GM23248 (cell line): ENCODE measurements at regions of chr10 and their contacts with region 1.

Region 1: DNA sequence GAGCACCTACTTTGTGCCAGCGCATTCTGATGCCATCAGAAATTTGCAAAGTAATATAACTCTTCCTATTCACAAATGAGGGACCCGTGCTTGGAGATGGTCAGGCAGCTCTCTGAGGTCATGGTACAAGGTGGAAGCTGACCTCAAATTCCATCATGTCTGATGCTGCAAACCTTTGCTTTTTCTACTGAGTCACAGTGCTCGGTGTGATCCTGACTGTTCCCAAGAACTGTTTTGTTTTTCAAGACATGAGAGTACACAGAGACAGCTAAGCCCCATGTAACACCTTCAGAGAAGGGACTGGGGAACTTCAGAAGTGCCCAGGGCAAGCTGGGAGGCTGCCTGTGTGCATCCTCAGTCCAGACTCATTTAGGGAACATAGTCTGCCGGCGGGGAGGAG is 111.3 kb downstream of the FRMD4A start:
- DNase-seq: no peak
- H3K4me3 ChIP-seq: no peak overlapping the region
- H3K27ac ChIP-seq: no peak overlapping the region
- H3K4me1 ChIP-seq: no peaks in the 10 kb centered on the region
- H3K27me3 ChIP-seq: peaks cover 27% of the 10 kb centered on the region; the same call in 1 of the 2 replicates

Region 2: GRCh38 chr10:14466257-14466656 is 246.8 kb after region 1 on chr10:
- in situ Hi-C with region 1: loop called (anchors 10 kb)
- DNase-seq: peak; percentile 19
- H3K4me3 ChIP-seq: no peak overlapping the region
- H3K27ac ChIP-seq: no peak overlapping the region
- H3K4me1 ChIP-seq: no peaks in the 10 kb centered on the region
- H3K27me3 ChIP-seq: peaks cover 60% of the 10 kb centered on the region